IMR-90 (cell line): ENCODE measurements at regions of chr11 and their contacts with region 1.

Region 1: DNA sequence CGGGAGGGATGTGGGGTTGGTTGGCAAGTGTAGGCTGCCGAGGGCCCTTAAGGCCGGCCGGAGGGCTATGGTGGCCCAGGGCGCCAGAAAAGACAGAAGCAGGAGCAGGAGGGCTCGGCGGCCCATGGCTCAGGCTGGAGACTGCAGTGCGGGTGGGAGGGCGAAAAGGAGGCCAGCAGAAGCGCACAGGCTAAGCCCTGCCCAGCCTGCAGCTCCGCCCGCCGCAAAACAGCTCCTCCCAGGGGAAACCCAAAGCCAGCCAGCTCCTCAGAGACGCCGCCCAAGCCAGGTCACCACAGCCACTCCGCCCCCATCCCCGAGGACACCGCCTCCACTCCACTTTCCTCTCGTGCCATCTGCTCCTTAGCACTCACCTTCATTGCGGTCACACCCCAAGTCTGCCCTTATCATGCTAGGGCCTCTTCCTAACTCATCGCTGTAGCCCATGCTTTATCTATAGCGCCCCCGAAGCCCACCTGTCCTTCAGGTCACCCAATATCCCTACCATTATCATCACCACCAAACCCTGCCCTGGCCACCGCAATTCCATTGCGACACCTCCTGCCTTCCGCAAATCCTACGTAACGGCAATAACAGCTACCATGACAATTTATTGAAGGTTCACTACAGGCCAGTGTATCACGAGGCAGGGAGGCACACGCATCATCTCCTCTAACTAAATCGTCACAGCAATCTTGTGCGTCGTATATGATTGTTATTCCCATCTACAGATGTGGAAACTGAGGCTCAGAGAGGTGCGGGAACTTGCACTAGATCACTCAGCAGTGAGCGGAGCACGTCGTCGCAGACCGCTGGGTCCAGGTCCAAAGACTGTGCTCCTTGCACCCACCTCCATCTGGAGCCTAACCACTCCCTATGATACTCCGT is at the start of gene PRCP:
- DNase-seq: peak; percentile 85
- ATAC-seq: peak; percentile 92
- H3K4me3 ChIP-seq: peak within 1 kb of the TSS; percentile 64
- H3K27ac ChIP-seq: peak within 1 kb of the TSS; percentile 75
- H3K4me1 ChIP-seq: 0 out of 2 replicates have a peak, but pooled peaks cover 1% of the 10 kb centered on the region
- H3K27me3 ChIP-seq: no peaks in the 10 kb centered on the region
- CTCF ChIP-seq: no peak
- POLR2A ChIP-seq: peak; percentile 63
- RAD21 ChIP-seq: no peak
- total RNA-seq, gene PRCP: 31.7 TPM in 2 replicates

Region 2: GRCh38 chr11:82718307-82718706 is 182.2 kb before region 1 on chr11:
- CTCF ChIA-PET with region 1: no interaction called
- POLR2A ChIA-PET with region 1: no interaction called
- dilution Hi-C with region 1: no loop called
- in situ Hi-C with region 1: no loop called
- intact Hi-C with region 1: loop called (anchors 1 kb)
- DNase-seq: peak; percentile 49
- ATAC-seq: peak; percentile 93
- H3K4me3 ChIP-seq: no peak overlapping the region
- H3K27ac ChIP-seq: no peak overlapping the region
- H3K4me1 ChIP-seq: no peaks in the 10 kb centered on the region
- H3K27me3 ChIP-seq: peaks cover 9% of the 10 kb centered on the region
- CTCF ChIP-seq: peak; percentile 72
- POLR2A ChIP-seq: no peak
- RAD21 ChIP-seq: peak; percentile 69

Region 3: DNA sequence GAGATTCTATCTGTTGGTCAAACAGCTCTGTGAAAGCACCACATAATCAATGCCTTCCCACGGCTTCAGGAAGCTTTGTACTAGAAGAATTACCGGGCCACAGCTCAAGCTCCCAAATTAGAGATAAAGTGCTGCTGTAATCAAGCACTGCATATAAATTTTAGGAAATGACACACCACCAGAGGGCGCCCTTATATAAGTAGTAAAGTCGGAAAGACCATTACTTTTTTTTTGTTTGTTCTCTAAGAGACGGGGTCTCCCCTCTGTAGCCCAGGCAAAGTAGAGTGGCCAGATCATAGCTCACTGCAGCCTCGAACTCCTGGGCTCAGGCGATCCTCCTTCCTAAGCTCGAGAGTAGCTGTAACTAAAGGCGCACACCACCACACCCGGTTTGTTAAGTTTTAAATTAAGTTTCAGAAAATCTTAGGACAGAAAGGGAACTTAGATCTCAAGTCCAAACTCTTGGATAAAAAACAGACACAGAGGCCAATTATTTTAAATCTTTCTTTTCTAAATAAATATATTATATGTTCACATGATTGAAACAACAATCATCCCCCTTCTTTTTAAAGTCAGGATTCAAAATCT is 32.9 kb before region 1 on chr11:
- CTCF ChIA-PET with region 1: interaction called, 8 read pairs
- POLR2A ChIA-PET with region 1: no interaction called
- dilution Hi-C with region 1: no loop called
- in situ Hi-C with region 1: no loop called
- intact Hi-C with region 1: loop called (anchors 1 kb)
- DNase-seq: peak; percentile 76
- ATAC-seq: peak; percentile 21; the same call in 1 of the 2 replicates
- H3K4me3 ChIP-seq: peak overlapping the region; percentile 29; the same call in 1 of the 2 replicates
- H3K27ac ChIP-seq: no peak overlapping the region
- H3K4me1 ChIP-seq: peaks cover 5% of the 10 kb centered on the region; the same call in 1 of the 2 replicates
- H3K27me3 ChIP-seq: no peaks in the 10 kb centered on the region
- CTCF ChIP-seq: peak; percentile 71
- POLR2A ChIP-seq: no peak
- RAD21 ChIP-seq: peak; percentile 63

Region 4: GRCh38 chr11:82936261-82936660 is 35.7 kb after region 1 on chr11:
- CTCF ChIA-PET with region 1: no interaction called
- POLR2A ChIA-PET with region 1: no interaction called
- dilution Hi-C with region 1: no loop called
- in situ Hi-C with region 1: no loop called
- intact Hi-C with region 1: no loop called
- DNase-seq: peak; percentile 31
- ATAC-seq: no peak
- H3K4me3 ChIP-seq: no peak overlapping the region
- H3K27ac ChIP-seq: no peak overlapping the region
- H3K4me1 ChIP-seq: no peaks in the 10 kb centered on the region
- H3K27me3 ChIP-seq: no peaks in the 10 kb centered on the region
- CTCF ChIP-seq: no peak
- POLR2A ChIP-seq: no peak
- RAD21 ChIP-seq: no peak

Region 5: GRCh38 chr11:83162377-83162776 is 261.9 kb after region 1 on chr11:
- CTCF ChIA-PET with region 1: no interaction called
- POLR2A ChIA-PET with region 1: no interaction called
- dilution Hi-C with region 1: no loop called
- in situ Hi-C with region 1: loop called (anchors 10 kb)
- intact Hi-C with region 1: loop called (anchors 2 kb)
- DNase-seq: peak; percentile 16
- ATAC-seq: no peak
- H3K4me3 ChIP-seq: no peak overlapping the region
- H3K27ac ChIP-seq: no peak overlapping the region
- H3K4me1 ChIP-seq: peaks cover 3% of the 10 kb centered on the region
- H3K27me3 ChIP-seq: no peaks in the 10 kb centered on the region
- CTCF ChIP-seq: no peak
- POLR2A ChIP-seq: no peak
- RAD21 ChIP-seq: no peak

Region 6: GRCh38 chr11:83285771-83286528 is 385.4 kb after region 1 on chr11 and contains the start of gene CCDC90B:
- CTCF ChIA-PET with region 1: interaction called, 3 read pairs
- POLR2A ChIA-PET with region 1: no interaction called
- dilution Hi-C with region 1: no loop called
- in situ Hi-C with region 1: no loop called
- intact Hi-C with region 1: loop called (anchors 5 kb)
- DNase-seq: peak; percentile 98
- ATAC-seq: peak; percentile 94
- H3K4me3 ChIP-seq: peak within 1 kb of the TSS; percentile 65
- H3K27ac ChIP-seq: peak within 1 kb of the TSS; percentile 92
- H3K4me1 ChIP-seq: peaks cover 2% of the 10 kb centered on the region
- H3K27me3 ChIP-seq: no peaks in the 10 kb centered on the region
- CTCF ChIP-seq: peak; percentile 54
- POLR2A ChIP-seq: peak; percentile 94
- RAD21 ChIP-seq: no peak
- total RNA-seq, gene CCDC90B: 43.7 and 63.0 TPM in 2 replicates